ENCODE measurements at regions of chr11 and their contacts with region 1.

Region 1: GRCh38 chr11:108222686-108223448 is at the start of gene ATM:
- DNase-seq: peak; percentile 98 to 99 (median 99)
- H3K4me3 ChIP-seq: peak within 1 kb of the TSS; percentile 97 to 99
- H3K4me3 Mint-ChIP-seq: no peak within 1 kb of the TSS
- H3K27ac ChIP-seq: peak within 1 kb of the TSS; percentile 97
- H3K27ac Mint-ChIP-seq: no peak within 1 kb of the TSS
- H3K4me1 ChIP-seq: peaks cover 57% of the 10 kb centered on the region
- H3K4me1 Mint-ChIP-seq: peaks cover 33 to 57% (median 47%) of the 10 kb centered on the region in 4 donors
- H3K27me3 ChIP-seq: no peaks in the 10 kb centered on the region
- H3K27me3 Mint-ChIP-seq: no peaks in the 10 kb centered on the region
- total RNA-seq, gene ATM: 525 to 555 TPM

Region 2: GRCh38 chr11:107565219-107565937 is 657.5 kb before region 1 on chr11 and contains the start of gene ALKBH8:
- CTCF ChIA-PET with region 1: no interaction called
- POLR2A ChIA-PET with region 1: no interaction called
- intact Hi-C with region 1: loop called (anchors 10 kb)
- DNase-seq: peak; percentile 74 to 86 (median 77)
- H3K4me3 ChIP-seq: peak within 1 kb of the TSS; percentile 68 to 73
- H3K4me3 Mint-ChIP-seq: peak within 1 kb of the TSS; percentile 94 to 98 (median 96)
- H3K27ac ChIP-seq: peak within 1 kb of the TSS; percentile 58
- H3K27ac Mint-ChIP-seq: peak within 1 kb of the TSS; percentile 89 to 97 (median 95)
- H3K4me1 ChIP-seq: peaks cover 28% of the 10 kb centered on the region
- H3K4me1 Mint-ChIP-seq: peaks cover 23 to 43% (median 40%) of the 10 kb centered on the region in 4 donors
- H3K27me3 ChIP-seq: no peaks in the 10 kb centered on the region
- H3K27me3 Mint-ChIP-seq: no peaks in the 10 kb centered on the region
- total RNA-seq, gene ALKBH8: 14.6 to 15.2 TPM

Region 3: GRCh38 chr11:108170184-108170583 is 52.7 kb before region 1 on chr11:
- CTCF ChIA-PET with region 1: no interaction called
- POLR2A ChIA-PET with region 1: no interaction called
- intact Hi-C with region 1: no loop called
- DNase-seq: no peak
- H3K4me3 ChIP-seq: no peak overlapping the region
- H3K4me3 Mint-ChIP-seq: peak overlapping the region; percentile 7 to 86 (median 50)
- H3K27ac ChIP-seq: peak overlapping the region; percentile 0
- H3K27ac Mint-ChIP-seq: peak overlapping the region; percentile 15 to 90 (median 75)
- H3K4me1 ChIP-seq: peaks cover 14% of the 10 kb centered on the region
- H3K4me1 Mint-ChIP-seq: peaks cover 11 to 42% (median 30%) of the 10 kb centered on the region in 4 donors
- H3K27me3 ChIP-seq: no peaks in the 10 kb centered on the region
- H3K27me3 Mint-ChIP-seq: no peaks in the 10 kb centered on the region

Region 4: GRCh38 chr11:108237058-108237481 is 14.2 kb after region 1 on chr11:
- CTCF ChIA-PET with region 1: interaction called, 132 read pairs
- POLR2A ChIA-PET with region 1: interaction called, 666 read pairs
- intact Hi-C with region 1: loop called (anchors 1 kb)
- DNase-seq: peak in 3 of 5 donors; percentile 41 to 60 (median 55)
- H3K4me3 ChIP-seq: peak overlapping the region; percentile 11 to 42
- H3K4me3 Mint-ChIP-seq: peak overlapping the region; percentile 52 to 83 (median 80)
- H3K27ac ChIP-seq: peak overlapping the region; percentile 66
- H3K27ac Mint-ChIP-seq: peak overlapping the region; percentile 85 to 98 (median 95)
- H3K4me1 ChIP-seq: peaks cover 99% of the 10 kb centered on the region
- H3K4me1 Mint-ChIP-seq: peaks cover 58 to 89% (median 74%) of the 10 kb centered on the region in 4 donors
- H3K27me3 ChIP-seq: no peaks in the 10 kb centered on the region
- H3K27me3 Mint-ChIP-seq: no peaks in the 10 kb centered on the region

Region 5: DNA sequence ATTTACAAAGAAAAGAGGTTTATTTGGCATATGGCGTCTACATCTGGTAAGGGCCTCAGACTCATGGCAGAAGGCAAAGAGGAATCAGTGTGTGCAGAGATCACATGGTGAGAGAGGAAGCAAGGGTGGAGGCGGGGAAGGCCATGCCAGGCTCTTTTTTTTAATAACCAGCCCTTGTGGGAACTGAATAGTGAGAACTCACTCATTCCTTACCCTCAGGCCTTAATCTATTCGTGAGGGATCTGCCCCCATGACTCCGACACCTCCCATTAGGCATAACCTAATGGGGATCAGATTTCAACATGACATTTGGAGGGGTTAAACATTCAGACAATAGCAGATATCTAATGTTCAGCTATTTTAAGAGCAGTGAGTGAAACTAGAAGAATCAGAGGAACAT is 55.7 kb after region 1 on chr11:
- CTCF ChIA-PET with region 1: interaction called, 9 read pairs
- POLR2A ChIA-PET with region 1: interaction called, 6 read pairs
- intact Hi-C with region 1: loop called (anchors 2 kb)
- DNase-seq: no peak
- H3K4me3 ChIP-seq: no peak overlapping the region
- H3K4me3 Mint-ChIP-seq: peak overlapping the region in 2 of 8 donors; percentile 15 to 24
- H3K27ac ChIP-seq: no peak overlapping the region
- H3K27ac Mint-ChIP-seq: peak overlapping the region in 4 of 7 donors; percentile 2 to 86 (median 82)
- H3K4me1 ChIP-seq: peaks cover 13% of the 10 kb centered on the region
- H3K4me1 Mint-ChIP-seq: peaks cover 24 to 51% (median 28%) of the 10 kb centered on the region in 4 donors
- H3K27me3 ChIP-seq: no peaks in the 10 kb centered on the region
- H3K27me3 Mint-ChIP-seq: no peaks in the 10 kb centered on the region

Region 6: DNA sequence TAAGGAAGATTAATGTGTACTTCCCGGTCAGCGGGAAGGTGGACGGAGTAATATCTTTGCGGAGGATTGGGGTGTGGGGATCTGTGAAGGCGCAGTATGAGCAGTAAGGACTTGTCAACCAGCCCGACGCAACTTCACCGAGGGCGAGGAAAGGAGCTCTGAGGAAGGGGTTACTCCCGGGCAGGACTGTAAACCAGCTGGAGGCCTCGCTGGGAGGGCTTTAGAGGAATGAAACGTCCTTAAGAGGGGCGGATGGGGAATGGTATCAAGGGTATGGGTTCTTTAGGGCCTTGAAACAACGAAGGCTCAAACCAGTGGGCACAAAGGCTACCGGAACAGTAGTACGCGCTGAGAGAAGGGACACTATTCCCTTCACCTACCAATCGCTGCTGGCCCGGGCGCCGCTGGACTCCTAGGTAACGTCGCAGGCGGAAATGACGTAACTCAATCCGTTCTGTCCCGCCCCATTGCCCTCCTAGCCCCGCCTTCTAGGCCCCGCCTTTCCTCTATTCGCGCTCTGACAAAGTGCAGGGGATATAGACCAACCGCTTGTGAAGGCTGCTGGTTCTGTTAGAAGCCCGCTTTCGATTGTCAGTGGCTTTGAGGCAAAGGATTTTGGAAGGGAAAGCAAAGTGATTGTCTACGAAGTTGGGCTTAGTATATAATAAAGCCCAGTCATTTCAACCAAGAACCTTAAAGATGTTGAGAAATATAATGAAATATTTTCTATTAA is 244.4 kb after region 1 on chr11 and contains the start of gene C11orf65:
- CTCF ChIA-PET with region 1: no interaction called
- POLR2A ChIA-PET with region 1: interaction called, 13 read pairs
- intact Hi-C with region 1: loop called (anchors 1 kb)
- DNase-seq: peak; percentile 96 to 97 (median 97)
- H3K4me3 ChIP-seq: peak within 1 kb of the TSS; percentile 40 to 94
- H3K4me3 Mint-ChIP-seq: peak within 1 kb of the TSS; percentile 96 to 100 (median 97)
- H3K27ac ChIP-seq: peak within 1 kb of the TSS; percentile 95
- H3K27ac Mint-ChIP-seq: peak within 1 kb of the TSS; percentile 97 to 100 (median 100)
- H3K4me1 ChIP-seq: peaks cover 8% of the 10 kb centered on the region
- H3K4me1 Mint-ChIP-seq: peaks cover 5 to 16% (median 9%) of the 10 kb centered on the region in 4 donors
- H3K27me3 ChIP-seq: no peaks in the 10 kb centered on the region
- H3K27me3 Mint-ChIP-seq: no peaks in the 10 kb centered on the region
- total RNA-seq, gene C11orf65: 0.30 to 0.93 TPM

Region 7: GRCh38 chr11:108664730-108665525 is 442.1 kb after region 1 on chr11 and contains the start of gene DDX10:
- CTCF ChIA-PET with region 1: no interaction called
- POLR2A ChIA-PET with region 1: no interaction called
- intact Hi-C with region 1: loop called (anchors 10 kb)
- DNase-seq: peak; percentile 97 to 99 (median 98)
- H3K4me3 ChIP-seq: peak within 1 kb of the TSS; percentile 66 to 71
- H3K4me3 Mint-ChIP-seq: peak within 1 kb of the TSS; percentile 98 to 100 (median 100)
- H3K27ac ChIP-seq: peak within 1 kb of the TSS; percentile 64
- H3K27ac Mint-ChIP-seq: peak within 1 kb of the TSS; percentile 94 to 100 (median 99)
- H3K4me1 ChIP-seq: peaks cover 32% of the 10 kb centered on the region
- H3K4me1 Mint-ChIP-seq: peaks cover 32 to 56% (median 45%) of the 10 kb centered on the region in 4 donors
- H3K27me3 ChIP-seq: no peaks in the 10 kb centered on the region
- H3K27me3 Mint-ChIP-seq: no peaks in the 10 kb centered on the region
- total RNA-seq, gene DDX10: 17.4 to 18.2 TPM